Head of caudate nucleus (tissue), 42 donors: ENCODE measurements at regions of chr15 and their contacts with region 1.

Region 1: GRCh38 chr15:56739964-56740640 is 6.8 kb upstream of the ZNF280D start:
- DNase-seq: no peak

Region 2: GRCh38 chr15:56821721-56822425 is 81.8 kb after region 1 on chr15:
- intact Hi-C with region 1: loop called (anchors 10 kb)
- DNase-seq: peak in 40 of 42 donors; percentile 17 to 82 (median 59)

Region 3: DNA sequence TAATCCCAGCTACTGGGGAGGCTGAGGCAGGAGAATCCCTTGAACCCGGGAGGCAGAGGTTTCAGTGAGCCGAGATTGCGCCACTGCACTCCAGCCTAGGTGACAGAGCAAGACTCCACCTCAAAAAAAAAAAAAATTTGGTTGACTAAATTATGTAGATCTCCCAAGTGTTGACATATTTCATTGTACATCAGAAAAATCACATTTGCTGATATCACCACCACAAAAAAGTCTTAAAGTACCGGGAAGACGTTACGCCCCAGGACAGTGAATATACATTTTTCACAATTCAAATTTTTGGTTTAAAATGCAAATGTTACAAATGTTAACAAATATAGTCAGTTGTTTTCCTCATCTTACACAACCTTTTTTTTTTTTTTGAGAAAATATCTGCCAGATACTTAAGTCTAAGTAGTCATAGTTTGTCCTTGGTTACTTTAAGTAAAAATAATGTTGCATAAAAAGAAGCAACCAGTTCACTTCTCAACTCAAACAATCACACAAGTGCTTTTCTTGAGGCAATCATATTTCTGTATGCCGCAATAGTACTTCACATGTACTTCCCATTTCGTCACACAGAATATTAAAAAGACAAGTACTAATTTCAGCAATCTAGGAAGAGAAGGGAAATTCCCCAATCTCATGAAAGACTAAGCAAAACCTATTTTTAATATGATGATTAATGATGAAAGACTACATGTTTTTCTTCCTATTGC is 137.3 kb after region 1 on chr15:
- intact Hi-C with region 1: no loop called
- DNase-seq: no peak